ENCODE measurements at regions of chr6 and their contacts with region 1.

Region 1: DNA sequence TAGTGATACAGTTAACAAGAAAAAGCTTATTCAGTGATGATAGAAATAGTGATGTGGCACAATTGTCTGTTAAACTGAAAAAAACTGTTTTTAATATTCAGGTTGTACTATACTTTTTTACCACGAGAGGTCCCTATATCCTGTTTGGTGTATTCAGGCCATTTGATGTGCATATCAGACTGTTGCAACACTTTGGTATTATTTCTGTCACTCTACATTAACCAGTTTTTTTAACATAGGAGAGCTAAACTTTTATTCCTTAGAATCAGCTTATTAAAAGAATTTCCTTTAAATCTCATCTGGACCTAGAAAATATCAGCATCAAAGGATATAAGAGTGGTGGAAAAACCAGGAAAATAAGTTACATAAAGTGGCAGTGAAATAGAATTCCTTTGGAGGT is 36.8 kb downstream of the TSPYL4 start:
- DNase-seq: peak in 1 of 35 experiments; percentile 58
- ATAC-seq: peak in 3 of 4 experiments; percentile 48 to 59 (median 54)
- H3K4me3 ChIP-seq: no peak overlapping the region
- H3K4me3 Mint-ChIP-seq: no peak overlapping the region
- H3K27ac ChIP-seq: no peak overlapping the region
- H3K27ac Mint-ChIP-seq: peak overlapping the region; percentile 19 to 66
- H3K4me1 ChIP-seq: no peaks in the 10 kb centered on the region
- H3K4me1 Mint-ChIP-seq: peaks cover 5 to 9% (median 6%) of the 10 kb centered on the region in 3 donors
- H3K27me3 ChIP-seq: no peaks in the 10 kb centered on the region
- H3K27me3 Mint-ChIP-seq: no peaks in the 10 kb centered on the region

Region 2: GRCh38 chr6:116127771-116128493 is 89.1 kb before region 1 on chr6:
- CTCF ChIA-PET with region 1: no interaction called
- POLR2A ChIA-PET with region 1: no interaction called
- DNase-seq: no peak
- ATAC-seq: no peak
- H3K4me3 ChIP-seq: no peak overlapping the region
- H3K4me3 Mint-ChIP-seq: no peak overlapping the region
- H3K27ac ChIP-seq: no peak overlapping the region
- H3K27ac Mint-ChIP-seq: no peak overlapping the region
- H3K4me1 ChIP-seq: no peaks in the 10 kb centered on the region
- H3K4me1 Mint-ChIP-seq: peaks cover 6 to 10% (median 7%) of the 10 kb centered on the region in 3 donors
- H3K27me3 ChIP-seq: no peaks in the 10 kb centered on the region
- H3K27me3 Mint-ChIP-seq: no peaks in the 10 kb centered on the region

Region 3: DNA sequence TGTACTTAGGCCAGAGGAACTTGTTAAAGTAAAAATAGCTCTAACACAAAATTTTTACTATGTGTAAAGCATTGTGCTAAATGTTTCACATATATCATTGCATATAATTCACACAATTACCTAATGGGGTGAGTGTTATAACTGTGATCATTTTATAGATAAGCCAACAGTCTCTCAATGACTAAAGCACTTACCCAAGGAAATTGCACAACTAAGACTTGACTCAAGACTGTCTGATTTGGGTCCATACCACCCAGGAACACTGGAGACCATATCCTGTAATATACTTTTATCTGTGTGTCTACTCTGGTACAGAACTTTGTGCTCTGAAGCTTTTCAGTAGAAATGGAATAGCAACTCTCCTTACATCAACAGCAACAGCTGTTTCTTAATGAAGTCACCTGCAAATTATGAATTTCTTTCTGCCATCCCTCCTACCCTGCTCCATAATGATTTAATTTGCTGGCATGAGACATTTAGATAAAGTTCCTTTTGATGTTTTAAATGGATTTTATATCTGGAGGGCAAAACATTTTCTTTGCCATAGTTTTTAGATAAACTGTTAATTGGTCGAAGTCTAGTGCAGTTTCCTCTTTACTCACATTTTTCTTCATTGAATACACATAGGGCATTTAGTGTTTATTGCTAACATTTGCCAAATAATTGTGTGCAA is 10.7 kb before region 1 on chr6:
- CTCF ChIA-PET with region 1: interaction called, 5 to 10 read pairs
- POLR2A ChIA-PET with region 1: no interaction called
- DNase-seq: no peak
- ATAC-seq: no peak
- H3K4me3 ChIP-seq: no peak overlapping the region
- H3K4me3 Mint-ChIP-seq: no peak overlapping the region
- H3K27ac ChIP-seq: no peak overlapping the region
- H3K27ac Mint-ChIP-seq: no peak overlapping the region
- H3K4me1 ChIP-seq: no peaks in the 10 kb centered on the region
- H3K4me1 Mint-ChIP-seq: no peaks in the 10 kb centered on the region
- H3K27me3 ChIP-seq: no peaks in the 10 kb centered on the region
- H3K27me3 Mint-ChIP-seq: no peaks in the 10 kb centered on the region

Region 4: GRCh38 chr6:116229287-116229913 is 12.3 kb after region 1 on chr6:
- CTCF ChIA-PET with region 1: interaction called, 4 to 10 read pairs
- POLR2A ChIA-PET with region 1: no interaction called
- DNase-seq: peak in 4 of 35 experiments; percentile 3 to 9 (median 6)
- ATAC-seq: no peak
- H3K4me3 ChIP-seq: no peak overlapping the region
- H3K4me3 Mint-ChIP-seq: no peak overlapping the region
- H3K27ac ChIP-seq: no peak overlapping the region
- H3K27ac Mint-ChIP-seq: no peak overlapping the region
- H3K4me1 ChIP-seq: no peaks in the 10 kb centered on the region
- H3K4me1 Mint-ChIP-seq: no peaks in the 10 kb centered on the region
- H3K27me3 ChIP-seq: no peaks in the 10 kb centered on the region
- H3K27me3 Mint-ChIP-seq: no peaks in the 10 kb centered on the region

Region 5: DNA sequence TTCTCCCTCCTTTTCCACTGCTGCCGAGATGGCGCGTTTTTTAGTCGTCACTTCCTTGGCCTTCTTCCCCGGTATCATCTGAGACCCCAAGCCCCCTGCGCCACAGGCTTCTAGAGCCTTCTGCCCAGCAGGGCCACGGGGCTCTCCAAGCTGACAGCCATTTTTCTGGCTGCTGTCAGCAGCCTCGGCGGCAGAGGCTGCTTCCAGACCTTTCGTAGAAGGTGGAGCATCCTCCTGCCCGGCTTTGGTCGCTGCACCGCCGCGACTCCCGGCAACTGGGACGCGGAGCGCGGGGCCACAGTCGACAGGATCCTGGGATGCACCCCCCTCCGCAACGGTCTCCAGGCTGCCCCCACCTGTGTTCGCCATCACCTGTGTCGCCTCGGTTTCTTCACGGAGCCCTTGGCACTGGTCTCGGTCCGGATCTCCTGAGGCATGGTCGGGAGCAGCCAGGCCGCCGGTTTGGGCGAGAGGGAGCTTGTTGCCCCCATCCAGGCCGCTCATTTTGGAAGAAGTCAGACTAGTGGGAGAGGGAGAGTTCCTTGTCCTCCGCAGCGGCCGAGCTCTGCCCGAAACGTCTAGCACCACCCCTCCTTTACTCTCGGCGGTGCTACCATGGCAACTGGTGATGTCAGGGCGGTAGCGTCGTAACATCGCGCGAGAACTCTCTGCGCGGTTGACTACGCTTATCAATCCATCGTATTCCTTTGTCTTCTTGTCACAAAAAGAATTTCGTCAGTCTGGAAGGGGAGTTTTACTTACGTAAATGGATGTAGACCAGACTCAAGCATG is 36.6 kb after region 1 on chr6 and contains the start of gene TSPYL4:
- CTCF ChIA-PET with region 1: interaction called, 3 to 11 read pairs
- POLR2A ChIA-PET with region 1: interaction called, 3 to 4 read pairs
- DNase-seq: peak; percentile 78 to 98 (median 90)
- ATAC-seq: peak; percentile 96 to 98 (median 98)
- H3K4me3 ChIP-seq: peak within 1 kb of the TSS; percentile 71 to 100
- H3K4me3 Mint-ChIP-seq: no peak within 1 kb of the TSS
- H3K27ac ChIP-seq: peak within 1 kb of the TSS; percentile 98
- H3K27ac Mint-ChIP-seq: no peak within 1 kb of the TSS
- H3K4me1 ChIP-seq: peaks cover 28 to 29% of the 10 kb centered on the region in 2 experiments
- H3K4me1 Mint-ChIP-seq: peaks cover 8 to 34% (median 21%) of the 10 kb centered on the region in 3 donors
- H3K27me3 ChIP-seq: no peaks in the 10 kb centered on the region
- H3K27me3 Mint-ChIP-seq: no peaks in the 10 kb centered on the region
- total RNA-seq, gene TSPYL4: 18.6 to 60.2 (median 22.4) TPM

Region 6: DNA sequence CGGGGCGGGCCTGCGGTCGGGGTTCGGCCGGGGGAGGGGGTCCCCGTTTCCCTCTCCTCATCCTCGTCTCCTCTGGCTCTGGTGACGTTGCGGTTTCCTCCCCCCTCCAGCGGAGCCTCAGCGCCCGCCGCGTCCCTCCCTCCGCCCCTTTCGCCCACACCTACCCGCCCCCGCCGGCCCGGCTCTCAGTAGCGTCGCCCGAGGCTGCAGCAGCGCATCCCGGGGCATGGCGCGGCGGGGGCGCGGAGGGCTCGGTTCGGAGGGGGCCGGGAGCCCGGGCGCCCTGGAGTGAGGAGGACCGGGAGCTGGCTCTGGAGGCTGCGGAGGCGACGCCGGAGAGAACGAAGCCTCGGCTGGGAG is 153.7 kb after region 1 on chr6 and contains the start of gene DSE:
- CTCF ChIA-PET with region 1: no interaction called
- POLR2A ChIA-PET with region 1: no interaction called
- DNase-seq: peak; percentile 17 to 72 (median 43)
- ATAC-seq: peak; percentile 79 to 88 (median 84)
- H3K4me3 ChIP-seq: peak within 1 kb of the TSS; percentile 66 to 81
- H3K4me3 Mint-ChIP-seq: peak within 1 kb of the TSS; percentile 82 to 88 (median 86)
- H3K27ac ChIP-seq: peak within 1 kb of the TSS; percentile 52
- H3K27ac Mint-ChIP-seq: peak within 1 kb of the TSS; percentile 69 to 80
- H3K4me1 ChIP-seq: peaks cover 0 to 16% of the 10 kb centered on the region in 2 experiments
- H3K4me1 Mint-ChIP-seq: peaks cover 12 to 21% (median 17%) of the 10 kb centered on the region in 3 donors
- H3K27me3 ChIP-seq: peaks cover 0 to 11% of the 10 kb centered on the region in 2 experiments
- H3K27me3 Mint-ChIP-seq: peaks cover 13 to 28% of the 10 kb centered on the region in 2 donors
- total RNA-seq, gene DSE: 5.9 to 9.3 (median 7.4) TPM

Region 7: GRCh38 chr6:116531675-116532570 is 314.9 kb after region 1 on chr6:
- CTCF ChIA-PET with region 1: interaction called, 4 to 10 read pairs
- POLR2A ChIA-PET with region 1: interaction called in 1 of 2 experiments, 3 read pairs
- DNase-seq: peak in 34 of 35 experiments; percentile 17 to 81 (median 52)
- ATAC-seq: peak; percentile 77 to 97 (median 92)
- H3K4me3 ChIP-seq: no peak overlapping the region
- H3K4me3 Mint-ChIP-seq: no peak overlapping the region
- H3K27ac ChIP-seq: no peak overlapping the region
- H3K27ac Mint-ChIP-seq: no peak overlapping the region
- H3K4me1 ChIP-seq: no peaks in the 10 kb centered on the region
- H3K4me1 Mint-ChIP-seq: no peaks in the 10 kb centered on the region
- H3K27me3 ChIP-seq: no peaks in the 10 kb centered on the region
- H3K27me3 Mint-ChIP-seq: peaks cover 18 to 19% of the 10 kb centered on the region in 2 donors

Measured in T-cell (primary cell).